ENCODE measurements at regions of chr11 and their contacts with region 1.

Region 1: GRCh38 chr11:94623120-94623735 is 56.1 kb downstream of the PIWIL4 start:
- DNase-seq: peak; percentile 43 to 78
- H3K4me3 ChIP-seq: no peak overlapping the region
- H3K27ac ChIP-seq: no peak overlapping the region
- H3K4me1 ChIP-seq: no peaks in the 10 kb centered on the region
- H3K27me3 ChIP-seq: no peaks in the 10 kb centered on the region; a peak in 1 of 7 replicates
- CTCF ChIP-seq: peak; percentile 27 to 97 (median 88)
- EP300 ChIP-seq: no peak
- POLR2A ChIP-seq: no peak
- RAD21 ChIP-seq: peak; percentile 100

Region 2: DNA sequence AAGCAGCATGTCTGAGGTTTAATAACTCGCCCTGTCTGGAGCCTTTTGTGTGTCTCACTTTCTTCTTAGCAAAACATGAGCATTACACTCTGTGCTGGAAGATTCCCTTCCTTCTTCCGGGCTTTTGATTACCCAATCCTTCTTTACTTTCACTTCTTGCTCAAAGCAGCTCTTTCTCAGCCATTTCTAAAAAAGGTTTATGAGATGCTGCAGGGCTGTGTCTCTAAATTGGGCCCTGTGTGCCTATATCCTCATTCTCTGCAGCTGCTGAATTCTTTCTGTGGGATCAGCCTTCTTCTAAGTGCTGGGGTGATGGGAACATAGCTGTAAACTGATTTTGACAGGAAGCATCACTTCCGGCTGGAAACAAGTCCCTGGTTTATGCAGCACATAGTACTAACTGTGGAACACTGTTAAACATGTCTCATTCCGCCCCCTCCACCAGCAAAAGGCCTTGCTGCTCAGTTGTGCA is 15.7 kb after region 1 on chr11:
- CTCF ChIA-PET with region 1: interaction called, 11 read pairs
- POLR2A ChIA-PET with region 1: interaction called, 4 read pairs
- DNase-seq: peak in 1 of 2 experiments; percentile 17
- H3K4me3 ChIP-seq: no peak overlapping the region
- H3K27ac ChIP-seq: no peak overlapping the region
- H3K4me1 ChIP-seq: no peaks in the 10 kb centered on the region; a peak in 1 of 7 replicates
- H3K27me3 ChIP-seq: no peaks in the 10 kb centered on the region
- CTCF ChIP-seq: no peak
- EP300 ChIP-seq: no peak
- POLR2A ChIP-seq: no peak
- RAD21 ChIP-seq: no peak

Region 3: GRCh38 chr11:94673951-94674491 is 50.8 kb after region 1 on chr11:
- CTCF ChIA-PET with region 1: interaction called, 33 read pairs
- POLR2A ChIA-PET with region 1: no interaction called
- DNase-seq: peak in 1 of 2 experiments; percentile 37
- H3K4me3 ChIP-seq: no peak overlapping the region
- H3K27ac ChIP-seq: no peak overlapping the region
- H3K4me1 ChIP-seq: peaks cover 0 to 7% (median 0%) of the 10 kb centered on the region in 4 experiments; a peak in 1 of 7 replicates
- H3K27me3 ChIP-seq: no peaks in the 10 kb centered on the region
- CTCF ChIP-seq: no peak
- EP300 ChIP-seq: no peak
- POLR2A ChIP-seq: no peak
- RAD21 ChIP-seq: no peak

Region 4: GRCh38 chr11:94747146-94748080 is 124.2 kb after region 1 on chr11:
- CTCF ChIA-PET with region 1: interaction called, 23 read pairs
- POLR2A ChIA-PET with region 1: no interaction called
- DNase-seq: no peak
- H3K4me3 ChIP-seq: no peak overlapping the region
- H3K27ac ChIP-seq: no peak overlapping the region
- H3K4me1 ChIP-seq: no peaks in the 10 kb centered on the region; a peak in 1 of 7 replicates
- H3K27me3 ChIP-seq: no peaks in the 10 kb centered on the region
- CTCF ChIP-seq: no peak
- EP300 ChIP-seq: no peak
- POLR2A ChIP-seq: no peak
- RAD21 ChIP-seq: no peak

Region 5: GRCh38 chr11:94858023-94858705 is 234.9 kb after region 1 on chr11:
- CTCF ChIA-PET with region 1: interaction called, 10 read pairs
- POLR2A ChIA-PET with region 1: no interaction called
- DNase-seq: no peak
- H3K4me3 ChIP-seq: no peak overlapping the region
- H3K27ac ChIP-seq: no peak overlapping the region
- H3K4me1 ChIP-seq: no peaks in the 10 kb centered on the region
- H3K27me3 ChIP-seq: no peaks in the 10 kb centered on the region
- CTCF ChIP-seq: no peak
- EP300 ChIP-seq: no peak
- POLR2A ChIP-seq: no peak
- RAD21 ChIP-seq: no peak

Measured in H1 (cell line).